Aorta (tissue), 5 donors: ENCODE measurements at regions of chr4 and their contacts with region 1.

Region 1: GRCh38 chr4:120049732-120050494 is 16.7 kb downstream of the MAD2L1 start:
- DNase-seq: peak; percentile 76 to 81
- ATAC-seq: peak; percentile 93
- H3K4me3 ChIP-seq: peak overlapping the region; percentile 4 to 71
- H3K27ac ChIP-seq: peak overlapping the region; percentile 71 to 99
- H3K4me1 ChIP-seq: peaks cover 0 to 6% of the 10 kb centered on the region in 2 donors
- H3K27me3 ChIP-seq: no peaks in the 10 kb centered on the region

Region 2: DNA sequence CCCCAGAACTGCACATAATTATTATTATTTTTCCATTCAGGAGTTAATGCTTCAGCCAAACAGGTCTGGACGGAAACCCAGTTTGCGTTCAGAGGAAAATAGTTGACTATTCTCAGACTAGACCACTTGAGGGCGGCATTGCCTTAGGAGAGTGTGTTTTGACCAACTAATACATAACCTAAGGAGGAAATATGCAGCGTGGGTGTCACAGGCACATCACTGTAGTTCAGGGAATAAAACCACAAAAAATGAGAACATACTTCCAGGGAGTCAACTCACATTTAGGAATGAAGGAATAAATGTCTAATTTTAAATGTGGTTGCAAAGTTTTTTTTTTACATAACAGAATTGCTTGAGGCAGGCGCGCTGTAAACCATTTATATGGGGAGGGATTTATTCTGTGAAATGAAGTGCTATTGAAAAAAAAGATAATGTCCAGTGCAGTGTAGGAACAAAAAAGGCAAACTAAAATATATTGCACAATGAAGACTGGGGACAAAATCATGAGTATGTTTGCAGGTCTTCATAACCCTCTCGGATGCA is 1068.0 kb before region 1 on chr4:
- intact Hi-C with region 1: loop called in 1 of 2 experiments (anchors 10 kb)
- DNase-seq: peak in 1 of 2 donors; percentile 75
- ATAC-seq: peak; percentile 90
- H3K4me3 ChIP-seq: no peak overlapping the region
- H3K27ac ChIP-seq: peak overlapping the region in 1 of 2 donors; percentile 68
- H3K4me1 ChIP-seq: peaks cover 18 to 22% of the 10 kb centered on the region in 2 donors
- H3K27me3 ChIP-seq: no peaks in the 10 kb centered on the region

Region 3: DNA sequence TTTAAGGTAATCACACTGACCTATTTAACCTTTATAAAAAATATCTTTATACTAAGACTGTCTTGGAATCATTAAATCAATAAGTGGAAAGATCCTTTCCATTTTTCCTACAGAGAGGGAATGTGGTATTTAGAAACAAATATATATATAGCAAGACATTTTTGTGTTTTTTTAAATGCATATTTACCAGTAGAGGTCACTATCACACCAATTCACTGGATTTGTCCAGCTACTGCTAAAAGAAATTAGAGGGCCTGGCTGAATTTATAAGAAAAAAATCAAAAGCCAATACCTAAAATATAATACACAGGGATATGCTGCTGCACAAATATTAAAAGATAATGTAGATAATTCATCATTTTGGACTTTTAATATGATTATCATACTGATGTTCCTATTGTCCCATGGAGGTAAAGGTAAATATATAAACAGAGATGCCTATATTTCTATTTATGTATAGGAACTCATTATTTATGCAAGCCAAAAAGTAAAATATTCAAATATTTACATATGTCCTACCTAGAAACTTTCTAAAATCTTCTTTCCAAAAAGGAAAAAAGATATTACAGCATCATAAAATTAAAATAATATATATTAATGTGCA is 490.8 kb before region 1 on chr4:
- intact Hi-C with region 1: loop called (anchors 2 to 5 kb)
- DNase-seq: no peak
- ATAC-seq: peak; percentile 70
- H3K4me3 ChIP-seq: no peak overlapping the region
- H3K27ac ChIP-seq: no peak overlapping the region
- H3K4me1 ChIP-seq: no peaks in the 10 kb centered on the region
- H3K27me3 ChIP-seq: no peaks in the 10 kb centered on the region

Region 4: DNA sequence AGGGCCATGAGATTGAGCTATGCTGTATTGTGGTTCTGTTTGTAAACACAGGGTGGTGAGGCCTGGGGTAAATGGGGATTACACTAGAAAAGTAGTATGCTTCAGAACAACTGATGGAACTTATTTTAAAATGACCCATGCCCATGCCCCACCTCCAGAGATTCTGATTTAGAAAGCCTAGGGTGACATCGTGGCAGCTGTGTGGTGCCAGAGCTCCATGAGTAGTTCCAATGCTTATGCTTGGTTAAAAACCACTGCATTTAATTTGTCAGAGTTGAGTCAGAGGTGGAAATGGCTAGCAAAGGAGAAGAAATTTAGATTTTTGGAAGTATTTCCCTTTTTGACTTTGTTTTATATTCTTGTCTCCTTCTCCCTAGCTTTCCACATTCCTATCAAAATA is 357.9 kb before region 1 on chr4:
- intact Hi-C with region 1: loop called (anchors 5 kb)
- DNase-seq: peak in 1 of 2 donors; percentile 74
- ATAC-seq: peak; percentile 78
- H3K4me3 ChIP-seq: no peak overlapping the region
- H3K27ac ChIP-seq: peak overlapping the region in 1 of 2 donors; percentile 28
- H3K4me1 ChIP-seq: peaks cover 0 to 2% of the 10 kb centered on the region in 2 donors
- H3K27me3 ChIP-seq: no peaks in the 10 kb centered on the region

Region 5: DNA sequence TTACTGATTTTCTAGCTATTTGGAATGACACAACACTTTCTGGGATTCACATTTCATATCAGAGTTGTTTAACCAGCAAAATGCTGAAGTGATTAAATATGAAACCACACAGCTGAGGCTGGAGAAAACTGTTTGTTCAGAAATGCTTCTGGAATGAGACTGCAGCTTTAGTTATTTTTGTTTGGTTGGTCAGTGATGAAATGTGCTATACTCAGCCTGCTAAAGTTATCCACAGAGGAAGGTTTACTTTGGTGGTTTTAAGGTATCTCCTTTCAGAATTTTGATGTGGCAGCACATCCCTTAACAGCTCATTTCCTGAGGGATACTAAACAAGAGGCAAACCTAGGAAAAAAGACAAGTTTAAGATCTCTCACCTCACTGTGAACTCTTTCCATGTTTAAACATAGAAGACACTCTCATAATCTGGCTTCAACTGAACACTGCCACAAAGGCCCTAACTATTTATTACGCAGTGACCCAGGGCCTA is 314.7 kb before region 1 on chr4:
- intact Hi-C with region 1: loop called (anchors 5 kb)
- DNase-seq: no peak
- ATAC-seq: peak; percentile 61
- H3K4me3 ChIP-seq: no peak overlapping the region
- H3K27ac ChIP-seq: peak overlapping the region; percentile 17 to 86
- H3K4me1 ChIP-seq: peaks cover 7 to 11% of the 10 kb centered on the region in 2 donors
- H3K27me3 ChIP-seq: no peaks in the 10 kb centered on the region

Region 6: DNA sequence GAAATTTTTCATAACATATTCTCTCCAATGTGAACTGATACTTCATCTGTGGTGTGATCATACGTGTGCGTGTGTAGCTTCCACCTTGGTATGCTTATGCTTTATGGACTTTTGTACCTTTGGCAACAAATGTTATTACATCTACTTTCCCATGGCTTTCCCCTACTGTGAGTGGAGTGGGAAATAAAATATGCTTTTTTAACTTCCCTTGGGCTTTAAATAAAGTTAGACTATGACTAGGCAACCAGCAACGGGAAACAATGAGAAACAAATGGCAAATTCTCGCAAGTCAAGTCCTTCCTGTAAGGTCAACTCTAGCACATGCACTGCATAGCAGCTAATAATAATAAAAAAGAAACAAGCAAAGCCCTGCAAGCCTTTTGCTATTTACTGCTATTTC is 216.3 kb before region 1 on chr4:
- intact Hi-C with region 1: loop called (anchors 5 kb)
- DNase-seq: no peak
- ATAC-seq: peak; percentile 85
- H3K4me3 ChIP-seq: no peak overlapping the region
- H3K27ac ChIP-seq: peak overlapping the region in 1 of 2 donors; percentile 93
- H3K4me1 ChIP-seq: peaks cover 3 to 5% of the 10 kb centered on the region in 2 donors
- H3K27me3 ChIP-seq: no peaks in the 10 kb centered on the region

Region 7: GRCh38 chr4:119939071-119939995 is 110.6 kb before region 1 on chr4:
- intact Hi-C with region 1: loop called in 1 of 2 experiments (anchors 10 kb)
- DNase-seq: no peak
- ATAC-seq: peak; percentile 45
- H3K4me3 ChIP-seq: no peak overlapping the region
- H3K27ac ChIP-seq: peak overlapping the region in 1 of 2 donors; percentile 68
- H3K4me1 ChIP-seq: peaks cover 0 to 3% of the 10 kb centered on the region in 2 donors
- H3K27me3 ChIP-seq: no peaks in the 10 kb centered on the region